ENCODE measurements at regions of chr3 and their contacts with region 1.

Region 1: DNA sequence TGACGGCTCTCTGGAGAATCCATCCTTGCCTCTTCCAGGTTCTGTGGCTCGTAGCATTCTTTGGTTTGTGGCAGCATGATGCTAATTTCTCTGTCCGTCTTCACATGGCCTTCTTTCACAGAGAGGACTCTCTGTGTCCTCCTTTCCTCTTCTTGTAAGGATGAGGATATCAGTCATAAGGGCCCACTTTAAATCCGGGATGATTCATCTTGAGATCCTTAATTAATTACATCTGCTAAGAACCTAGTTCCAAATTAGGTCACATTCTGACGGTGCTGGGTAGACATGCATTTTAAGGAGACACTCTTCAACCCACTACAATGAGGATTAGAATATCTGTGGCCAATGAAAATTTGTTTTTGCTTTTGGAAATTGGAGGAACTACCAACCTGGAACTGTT is 15.7 kb upstream of the GXYLT2 start:
- DNase-seq: peak; percentile 51
- H3K4me3 ChIP-seq: no peak overlapping the region
- CTCF ChIP-seq: no peak

Region 2: DNA sequence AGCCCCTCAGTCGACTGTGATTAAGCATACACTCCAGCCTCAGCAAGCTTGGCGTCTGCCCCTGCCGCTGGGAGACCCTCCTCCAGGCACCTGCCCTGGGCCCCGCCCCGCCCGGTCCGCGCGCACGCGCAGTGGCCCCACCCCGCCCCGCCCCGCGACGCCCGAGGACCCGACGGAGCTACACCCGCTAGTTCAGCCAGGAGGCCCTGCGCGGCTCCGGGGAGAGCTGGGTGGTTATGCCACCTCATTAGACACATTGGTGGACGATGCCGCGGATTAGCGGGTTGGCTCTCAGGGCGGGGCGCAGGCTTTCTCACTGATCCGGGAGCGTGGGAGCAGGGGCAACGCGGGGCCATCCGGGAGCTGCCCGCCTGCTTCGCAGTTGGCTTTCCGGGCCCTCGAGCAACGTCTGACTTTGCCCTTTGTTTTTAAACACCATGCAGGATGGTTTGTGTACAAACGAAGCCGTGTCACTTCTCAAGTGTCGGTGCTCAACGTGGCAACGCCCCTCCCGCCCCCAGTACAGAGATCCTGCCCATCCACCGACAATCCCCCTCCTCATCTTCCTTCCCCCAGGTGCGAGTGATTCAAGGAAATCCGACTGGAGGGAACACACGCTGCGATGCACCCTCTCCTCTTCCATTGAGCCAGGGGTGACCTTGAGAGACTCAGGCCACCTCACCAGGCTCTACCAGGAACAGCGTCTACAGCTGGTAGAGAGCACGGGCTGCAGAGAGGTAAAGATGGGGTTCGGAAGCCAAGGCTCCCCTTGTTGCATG is 133.2 kb before region 1 on chr3:
- CTCF ChIA-PET with region 1: no interaction called
- POLR2A ChIA-PET with region 1: no interaction called
- DNase-seq: no peak
- H3K4me3 ChIP-seq: peak overlapping the region; percentile 39
- CTCF ChIP-seq: no peak

Region 3: GRCh38 chr3:72887705-72888545 is 15.7 kb after region 1 on chr3 and contains the start of gene GXYLT2:
- CTCF ChIA-PET with region 1: interaction called, 16 read pairs
- POLR2A ChIA-PET with region 1: no interaction called
- DNase-seq: no peak
- H3K4me3 ChIP-seq: peak within 1 kb of the TSS; percentile 67
- CTCF ChIP-seq: no peak

Measured in AG04449 (cell line).